Heart right ventricle (tissue), 16 donors: ENCODE measurements at regions of chr1 and their contacts with region 1.

Region 1: DNA sequence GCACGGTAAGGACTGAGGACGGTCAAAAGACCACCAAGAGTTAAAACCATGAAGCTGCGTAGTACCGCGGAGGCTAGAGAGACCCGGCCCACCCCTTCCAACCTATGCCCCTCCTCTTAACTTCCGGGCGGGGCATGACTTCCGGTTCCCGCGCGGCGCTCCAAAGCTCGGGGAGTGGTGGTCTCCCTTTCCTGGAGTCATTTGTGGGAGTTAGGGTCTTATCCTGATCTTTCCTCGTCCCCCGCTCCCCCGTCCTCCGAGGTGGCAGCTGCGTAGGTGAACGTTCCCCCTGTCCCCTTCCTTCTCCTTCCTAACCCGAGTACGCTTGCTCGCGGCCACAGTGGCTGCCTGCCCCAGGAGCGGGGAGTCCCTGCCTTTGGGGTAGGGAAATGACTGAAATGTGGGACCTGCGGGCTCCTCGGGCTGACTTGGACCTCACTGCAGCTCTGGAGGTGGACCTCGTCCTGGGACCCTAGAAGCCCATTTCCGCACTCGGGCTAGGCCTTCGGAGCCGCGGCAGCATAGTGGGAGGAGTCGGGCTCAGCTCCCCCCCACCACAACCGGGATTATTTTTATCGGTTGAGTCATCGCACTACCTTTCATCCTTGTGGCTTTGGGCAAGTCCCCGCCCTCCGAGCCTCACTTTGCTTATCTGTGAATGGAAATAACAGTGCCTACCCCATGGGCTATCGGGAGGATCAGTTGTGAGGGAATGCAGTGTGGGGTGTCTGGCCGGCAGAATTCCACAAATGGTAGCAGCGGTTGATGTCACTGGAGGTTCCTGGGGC is 24.1 kb downstream of the CELA3A start:
- DNase-seq: peak; percentile 79 to 91
- ATAC-seq: peak; percentile 96 to 98 (median 97)
- H3K4me3 ChIP-seq: peak overlapping the region; percentile 63 to 98 (median 84)
- H3K27ac ChIP-seq: peak overlapping the region; percentile 92 to 99 (median 97)
- H3K4me1 ChIP-seq: peaks cover 0 to 28% (median 13%) of the 10 kb centered on the region in 9 donors
- H3K27me3 ChIP-seq: no peaks in the 10 kb centered on the region
- CTCF ChIP-seq: no peak

Region 2: GRCh38 chr1:22052115-22053016 is 26.8 kb after region 1 on chr1 and contains the start of gene CDC42:
- intact Hi-C with region 1: loop called in 1 of 10 experiments (anchors 2 kb)
- DNase-seq: peak; percentile 97
- ATAC-seq: peak; percentile 98 to 99 (median 99)
- H3K4me3 ChIP-seq: peak within 1 kb of the TSS; percentile 63 to 90 (median 73)
- H3K27ac ChIP-seq: peak within 1 kb of the TSS; percentile 94 to 100 (median 99)
- H3K4me1 ChIP-seq: peaks cover 3 to 54% (median 36%) of the 10 kb centered on the region in 9 donors
- H3K27me3 ChIP-seq: no peaks in the 10 kb centered on the region
- CTCF ChIP-seq: no peak
- total RNA-seq, gene CDC42: 139 to 259 (median 174) TPM

Region 3: DNA sequence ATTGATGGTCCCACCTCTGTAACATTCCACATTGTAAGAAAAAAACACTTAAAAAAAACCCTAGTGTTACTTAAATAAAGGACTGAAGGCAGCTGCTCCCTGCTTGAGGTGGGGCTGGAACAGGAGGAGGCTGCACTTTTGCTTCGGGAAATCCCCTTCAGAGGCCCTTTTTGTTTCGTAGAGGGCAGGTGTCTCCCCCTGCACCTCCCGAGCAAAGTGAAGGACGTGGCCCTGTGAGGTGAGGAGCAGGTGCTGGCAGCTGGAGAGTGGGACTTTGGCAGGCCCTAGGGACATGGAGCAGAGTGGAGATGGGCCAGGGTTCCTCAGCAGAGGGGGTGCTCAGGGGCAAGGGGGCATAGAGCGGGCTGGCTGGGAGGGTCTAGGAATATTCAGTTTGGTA is 150.7 kb after region 1 on chr1:
- intact Hi-C with region 1: no loop called
- DNase-seq: no peak
- ATAC-seq: no peak
- H3K4me3 ChIP-seq: no peak overlapping the region
- H3K27ac ChIP-seq: no peak overlapping the region
- H3K4me1 ChIP-seq: no peaks in the 10 kb centered on the region
- H3K27me3 ChIP-seq: peaks cover 0 to 26% (median 5%) of the 10 kb centered on the region in 7 donors
- CTCF ChIP-seq: no peak

Region 4: DNA sequence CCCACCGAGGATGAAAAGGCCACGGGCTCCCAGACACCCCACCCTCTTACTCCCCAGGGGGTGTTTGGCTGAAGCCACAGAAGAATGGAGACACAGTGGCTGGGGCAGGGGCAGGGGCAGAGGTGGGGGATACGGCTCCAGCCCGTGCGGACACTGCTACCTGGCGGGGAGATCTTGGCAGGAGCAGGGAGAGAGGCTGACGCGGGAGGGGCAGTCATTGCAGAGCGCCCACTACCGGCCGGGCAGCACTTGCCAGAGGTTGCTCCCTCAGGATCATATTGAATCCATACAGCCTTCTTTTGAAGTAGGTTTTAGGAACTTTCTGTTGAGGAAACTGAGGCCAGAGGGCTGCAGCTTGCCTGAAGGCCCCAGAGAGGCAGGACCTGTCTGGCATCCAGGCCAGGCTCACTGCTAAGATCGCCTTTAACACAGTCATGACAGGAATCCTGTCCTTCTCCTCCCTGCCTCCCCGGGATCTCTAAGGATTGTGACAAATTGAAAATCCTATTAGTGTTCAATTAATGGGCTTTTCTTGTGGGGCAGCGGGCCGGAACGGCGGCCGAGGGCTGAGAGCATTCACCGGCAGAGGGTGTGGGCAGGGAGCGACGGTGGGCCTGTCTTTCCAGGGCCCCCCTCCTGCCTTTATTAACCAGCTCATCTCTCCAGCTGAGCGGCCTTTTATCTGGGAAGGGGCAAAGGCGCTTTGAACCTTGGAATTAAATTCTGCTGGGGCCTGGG is 182.8 kb after region 1 on chr1:
- intact Hi-C with region 1: no loop called
- DNase-seq: no peak
- ATAC-seq: no peak
- H3K4me3 ChIP-seq: no peak overlapping the region
- H3K27ac ChIP-seq: no peak overlapping the region
- H3K4me1 ChIP-seq: no peaks in the 10 kb centered on the region
- H3K27me3 ChIP-seq: peaks cover 4 to 81% (median 72%) of the 10 kb centered on the region in 7 donors
- CTCF ChIP-seq: no peak